ENCODE measurements at regions of chr5 and their contacts with region 1.

Region 1: GRCh38 chr5:126370796-126371718 is 52.2 kb upstream of the GRAMD2B start:
- DNase-seq: peak; percentile 16
- ATAC-seq: peak; percentile 29
- H3K4me3 Mint-ChIP-seq: no peak overlapping the region
- H3K27ac Mint-ChIP-seq: peak overlapping the region; percentile 77
- H3K4me1 Mint-ChIP-seq: peaks cover 61% of the 10 kb centered on the region
- H3K27me3 Mint-ChIP-seq: no peaks in the 10 kb centered on the region
- CTCF ChIP-seq: no peak

Region 2: DNA sequence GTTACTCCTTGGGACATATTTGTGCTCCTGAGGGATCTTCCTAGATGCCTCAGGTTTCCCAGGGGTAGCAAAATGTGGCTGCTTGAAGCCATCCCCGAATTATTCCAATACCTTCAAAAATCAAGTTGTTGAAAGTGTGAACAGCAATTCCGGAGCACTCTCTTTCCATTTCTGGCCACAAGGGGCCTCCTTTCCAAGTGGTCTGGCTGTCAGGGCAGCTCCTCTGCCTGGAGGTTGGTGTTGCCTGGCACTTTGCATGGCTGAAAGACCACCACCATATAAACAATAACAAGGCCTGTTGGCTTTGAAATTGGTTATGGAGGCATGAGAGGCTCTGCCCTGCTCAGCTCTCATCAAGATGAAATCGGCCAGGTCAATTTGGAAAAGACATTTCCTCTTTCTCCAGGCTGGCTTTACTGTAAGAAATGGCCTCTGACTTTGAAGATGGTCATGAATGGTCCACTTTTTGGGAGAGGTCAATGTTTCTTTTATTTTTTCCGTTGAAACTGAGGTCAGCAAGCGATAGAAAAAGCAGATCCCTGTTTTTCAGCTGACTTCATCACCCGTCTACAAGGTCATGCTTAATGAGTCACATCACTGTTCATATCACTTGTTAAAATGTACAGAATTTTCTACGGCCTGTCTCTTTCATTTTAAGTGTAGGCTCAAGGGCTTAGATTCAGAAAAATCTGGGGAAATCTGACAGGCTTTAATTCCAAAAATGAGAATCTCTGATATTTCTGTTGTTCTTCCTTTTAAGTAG is 1143.5 kb before region 1 on chr5:
- CTCF ChIA-PET with region 1: no interaction called
- POLR2A ChIA-PET with region 1: no interaction called
- DNase-seq: peak; percentile 50
- ATAC-seq: peak; percentile 78
- H3K4me3 Mint-ChIP-seq: no peak overlapping the region
- H3K27ac Mint-ChIP-seq: no peak overlapping the region
- H3K4me1 Mint-ChIP-seq: no peaks in the 10 kb centered on the region
- H3K27me3 Mint-ChIP-seq: peaks cover 3% of the 10 kb centered on the region; the same call in 1 of the 2 replicates
- CTCF ChIP-seq: peak; percentile 41; the same call in 1 of the 2 replicates

Region 3: GRCh38 chr5:126384985-126385384 is 13.9 kb after region 1 on chr5:
- CTCF ChIA-PET with region 1: interaction called, 16 read pairs
- POLR2A ChIA-PET with region 1: no interaction called
- DNase-seq: no peak
- ATAC-seq: no peak
- H3K4me3 Mint-ChIP-seq: no peak overlapping the region
- H3K27ac Mint-ChIP-seq: no peak overlapping the region
- H3K4me1 Mint-ChIP-seq: peaks cover 12% of the 10 kb centered on the region
- H3K27me3 Mint-ChIP-seq: no peaks in the 10 kb centered on the region
- CTCF ChIP-seq: no peak

Region 4: GRCh38 chr5:126525630-126526245 is 154.7 kb after region 1 on chr5:
- CTCF ChIA-PET with region 1: no interaction called
- POLR2A ChIA-PET with region 1: no interaction called
- DNase-seq: peak; percentile 47
- ATAC-seq: peak; percentile 98
- H3K4me3 Mint-ChIP-seq: no peak overlapping the region; the same call in 1 of the 2 replicates
- H3K27ac Mint-ChIP-seq: no peak overlapping the region
- H3K4me1 Mint-ChIP-seq: peaks cover 6% of the 10 kb centered on the region
- H3K27me3 Mint-ChIP-seq: no peaks in the 10 kb centered on the region
- CTCF ChIP-seq: no peak